Aorta (tissue), 5 donors: ENCODE measurements at regions of chr1 and their contacts with region 1.

Region 1: DNA sequence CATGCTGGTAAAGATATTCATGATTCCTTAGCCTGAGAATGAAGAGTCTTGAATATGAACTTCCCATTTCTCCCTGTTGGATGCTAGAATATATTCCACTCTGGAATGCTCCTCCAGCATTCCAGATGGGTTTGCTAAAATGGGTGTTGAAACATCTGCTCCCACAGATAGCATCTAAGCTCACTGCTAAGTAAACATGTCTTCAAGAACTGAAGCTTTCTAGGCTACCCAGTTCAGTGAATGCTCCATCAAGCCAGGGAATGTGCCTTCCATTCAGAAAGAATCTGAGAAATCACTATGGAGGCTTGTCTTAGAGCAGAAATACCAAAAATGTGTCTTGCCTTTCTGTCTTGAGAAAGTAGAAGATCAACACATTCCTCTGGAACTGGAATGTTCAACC is 81.1 kb downstream of the TNFSF18 start:
- DNase-seq: no peak
- ATAC-seq: no peak
- H3K4me3 ChIP-seq: no peak overlapping the region
- H3K27ac ChIP-seq: no peak overlapping the region
- H3K4me1 ChIP-seq: no peaks in the 10 kb centered on the region
- H3K27me3 ChIP-seq: no peaks in the 10 kb centered on the region

Region 2: GRCh38 chr1:172917972-172918371 is 51.6 kb before region 1 on chr1:
- intact Hi-C with region 1: loop called in 1 of 2 experiments (anchors 5 kb)
- DNase-seq: no peak
- ATAC-seq: peak; percentile 26
- H3K4me3 ChIP-seq: no peak overlapping the region
- H3K27ac ChIP-seq: no peak overlapping the region
- H3K4me1 ChIP-seq: no peaks in the 10 kb centered on the region
- H3K27me3 ChIP-seq: no peaks in the 10 kb centered on the region

Region 3: GRCh38 chr1:172931761-172932160 is 37.9 kb before region 1 on chr1:
- intact Hi-C with region 1: loop called in 1 of 2 experiments (anchors 5 kb)
- DNase-seq: no peak
- ATAC-seq: no peak
- H3K4me3 ChIP-seq: no peak overlapping the region
- H3K27ac ChIP-seq: no peak overlapping the region
- H3K4me1 ChIP-seq: peaks cover 3 to 4% of the 10 kb centered on the region in 2 donors
- H3K27me3 ChIP-seq: no peaks in the 10 kb centered on the region